GM13977 (cell line): ENCODE measurements at regions of chr1 and their contacts with region 1.

Region 1: GRCh38 chr1:25022361-25023189 is 92.5 kb upstream of the RUNX3 start:
- DNase-seq: peak; percentile 87
- CTCF ChIP-seq: no peak

Region 2: DNA sequence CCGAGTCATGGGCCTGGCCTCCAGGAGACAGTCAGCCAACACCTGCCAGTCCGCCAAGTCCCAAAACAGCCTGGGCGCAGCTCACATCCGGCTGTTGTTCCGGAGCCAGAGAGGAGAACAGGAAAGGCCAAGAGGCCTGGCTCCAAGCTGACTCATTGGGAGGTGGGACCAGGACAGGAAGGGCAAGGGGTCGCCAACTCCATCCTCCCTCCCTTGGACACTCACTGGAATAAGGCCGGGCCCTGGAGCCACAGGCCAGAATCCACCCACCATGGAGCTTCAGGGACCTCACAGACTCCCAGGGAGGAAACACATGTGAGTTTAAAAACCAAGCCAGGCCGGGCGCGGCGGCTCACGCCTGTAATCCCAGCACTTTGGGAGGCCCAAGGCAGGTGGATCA is 302.4 kb before region 1 on chr1:
- in situ Hi-C with region 1: no loop called
- DNase-seq: no peak
- CTCF ChIP-seq: no peak

Region 3: GRCh38 chr1:24964811-24965570 is 57.6 kb before region 1 on chr1:
- in situ Hi-C with region 1: loop called (anchors 10 kb)
- DNase-seq: peak; percentile 90
- CTCF ChIP-seq: no peak

Region 4: GRCh38 chr1:25217598-25218232 is 195.1 kb after region 1 on chr1:
- in situ Hi-C with region 1: no loop called
- DNase-seq: no peak
- CTCF ChIP-seq: peak; percentile 2